H1 (cell line): ENCODE measurements at regions of chr5 and their contacts with region 1.

Region 1: GRCh38 chr5:160159991-160160792 is 40.9 kb upstream of the PWWP2A start:
- DNase-seq: peak; percentile 70 to 75
- H3K4me3 ChIP-seq: peak overlapping the region in 3 of 4 experiments; percentile 7 to 36 (median 19); a peak in 4 of 8 replicates
- H3K27ac ChIP-seq: peak overlapping the region; percentile 91
- H3K4me1 ChIP-seq: peaks cover 13 to 20% (median 15%) of the 10 kb centered on the region in 4 experiments
- H3K27me3 ChIP-seq: no peaks in the 10 kb centered on the region
- CTCF ChIP-seq: no peak
- EP300 ChIP-seq: peak in 1 of 2 experiments; percentile 51; a peak in 1 of 3 replicates
- POLR2A ChIP-seq: peak; percentile 62 to 77
- RAD21 ChIP-seq: peak; percentile 1 to 4; a peak in 1 of 4 replicates

Region 2: DNA sequence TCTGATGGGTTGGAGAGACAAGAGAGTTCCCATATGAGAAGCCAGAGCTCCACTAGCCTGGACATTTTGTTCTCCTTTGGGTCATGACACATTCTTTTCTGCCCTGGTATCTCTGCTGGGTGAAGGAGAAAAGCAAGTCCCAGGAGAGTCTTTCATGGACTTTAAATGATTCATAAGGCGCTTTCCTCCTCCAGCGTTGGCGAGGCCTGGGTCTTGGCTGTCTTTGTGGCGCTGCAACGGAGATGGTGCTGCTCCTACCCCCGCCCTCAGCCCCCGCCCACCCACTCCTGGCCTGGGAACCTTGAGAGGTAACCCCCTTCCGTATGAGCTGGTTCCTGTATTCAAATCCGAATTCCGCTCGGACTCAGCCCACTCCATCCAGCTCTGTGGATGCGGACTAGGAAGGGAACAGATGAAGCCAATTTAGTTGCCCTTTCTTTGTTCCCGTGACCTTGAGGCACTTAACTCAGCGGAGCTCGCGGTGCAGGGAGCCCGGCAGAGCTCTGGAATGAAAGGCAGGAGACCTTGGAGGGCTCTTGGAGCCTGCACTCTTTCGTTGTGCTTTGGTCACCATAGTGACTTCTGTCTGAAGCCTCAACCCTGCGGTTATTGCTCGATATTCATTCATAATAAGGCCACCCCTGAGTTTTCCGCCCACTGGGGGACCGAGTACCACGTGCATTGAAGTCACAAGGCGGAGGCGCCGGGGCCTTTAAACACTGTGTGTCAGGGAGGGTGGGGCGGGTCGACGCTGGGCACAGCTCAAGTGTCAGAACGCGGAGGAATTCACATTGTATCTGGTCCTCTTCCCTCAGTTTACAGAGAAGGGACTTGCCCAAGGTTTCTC is 26.9 kb before region 1 on chr5:
- CTCF ChIA-PET with region 1: interaction called, 4 read pairs
- POLR2A ChIA-PET with region 1: interaction called, 20 read pairs
- DNase-seq: peak; percentile 25 to 78
- H3K4me3 ChIP-seq: peak overlapping the region in 2 of 4 experiments; percentile 26 to 44; a peak in 5 of 8 replicates
- H3K27ac ChIP-seq: peak overlapping the region; percentile 72; the same call in 1 of the 2 replicates
- H3K4me1 ChIP-seq: peaks cover 0 to 12% (median 7%) of the 10 kb centered on the region in 4 experiments; a peak in 5 of 7 replicates
- H3K27me3 ChIP-seq: no peaks in the 10 kb centered on the region
- CTCF ChIP-seq: no peak
- EP300 ChIP-seq: no peak
- POLR2A ChIP-seq: no peak; a peak in 1 of 3 replicates
- RAD21 ChIP-seq: no peak

Region 3: GRCh38 chr5:160175438-160176218 is 15.4 kb after region 1 on chr5:
- CTCF ChIA-PET with region 1: interaction called, 29 read pairs
- POLR2A ChIA-PET with region 1: interaction called, 50 read pairs
- DNase-seq: no peak
- H3K4me3 ChIP-seq: no peak overlapping the region
- H3K27ac ChIP-seq: no peak overlapping the region
- H3K4me1 ChIP-seq: peaks cover 6 to 15% (median 7%) of the 10 kb centered on the region in 4 experiments; a peak in 6 of 7 replicates
- H3K27me3 ChIP-seq: no peaks in the 10 kb centered on the region
- CTCF ChIP-seq: no peak
- EP300 ChIP-seq: no peak
- POLR2A ChIP-seq: no peak
- RAD21 ChIP-seq: no peak

Region 4: DNA sequence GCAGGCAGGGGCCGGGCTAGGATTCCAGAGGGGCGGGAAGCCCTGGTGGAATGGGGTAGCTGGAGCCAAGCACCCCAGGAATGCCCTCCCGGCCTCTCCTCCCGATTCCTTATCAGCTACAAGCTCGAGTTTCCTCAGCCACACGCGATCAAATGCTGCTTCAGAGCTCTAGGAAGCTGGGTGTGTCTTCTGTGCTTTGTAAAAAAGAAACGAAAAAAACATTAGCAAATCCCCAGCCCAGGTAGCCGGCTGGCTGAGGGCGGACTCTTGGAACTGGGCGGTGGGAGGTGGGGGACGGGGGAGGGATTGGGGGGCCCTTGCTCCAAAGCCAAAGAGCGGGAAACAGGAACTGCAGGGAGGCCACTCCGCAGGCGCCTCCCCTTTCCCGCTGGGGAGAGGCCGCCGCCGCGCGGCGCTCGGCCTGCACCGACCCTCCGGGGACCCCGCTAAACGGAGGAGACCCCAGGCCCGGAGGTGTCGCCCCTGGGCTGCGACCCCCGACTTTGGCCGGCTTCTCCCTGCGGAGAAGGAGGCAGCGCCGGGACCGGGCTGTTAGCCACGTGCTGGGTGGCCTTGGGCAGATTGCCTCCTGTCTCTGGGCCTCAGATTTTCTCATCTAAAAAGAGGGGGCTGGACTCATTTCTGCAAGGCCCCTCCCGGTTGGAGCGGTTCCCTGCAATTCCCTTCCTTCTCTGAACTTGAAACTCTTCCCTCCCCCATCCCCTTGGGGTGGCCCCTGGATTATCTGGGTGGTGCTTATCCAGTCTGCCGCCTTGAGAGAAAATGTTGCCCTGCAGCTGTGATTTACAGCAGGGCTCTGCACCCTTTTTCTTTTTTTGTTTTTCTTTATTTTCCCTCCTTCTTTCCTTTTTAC is 28.2 kb after region 1 on chr5:
- CTCF ChIA-PET with region 1: interaction called, 29 read pairs
- POLR2A ChIA-PET with region 1: interaction called, 72 read pairs
- DNase-seq: peak in 1 of 2 experiments; percentile 86
- H3K4me3 ChIP-seq: peak overlapping the region; percentile 27 to 53 (median 31); a peak in 6 of 8 replicates
- H3K27ac ChIP-seq: peak overlapping the region; percentile 81
- H3K4me1 ChIP-seq: peaks cover 0 to 7% (median 3%) of the 10 kb centered on the region in 4 experiments; a peak in 6 of 7 replicates
- H3K27me3 ChIP-seq: no peaks in the 10 kb centered on the region
- CTCF ChIP-seq: no peak
- EP300 ChIP-seq: peak in 1 of 2 experiments; percentile 8; a peak in 1 of 3 replicates
- POLR2A ChIP-seq: peak; percentile 39 to 71
- RAD21 ChIP-seq: peak; percentile 7 to 26; a peak in 1 of 4 replicates